H1 (cell line): ENCODE measurements at regions of chrX and their contacts with region 1.

Region 1: GRCh38 chrX:40175511-40176350 is 78.0 kb upstream of the BCOR start:
- DNase-seq: peak in 1 of 2 experiments; percentile 56
- H3K4me3 ChIP-seq: peak overlapping the region; percentile 56 to 69 (median 61)
- H3K27ac ChIP-seq: peak overlapping the region; percentile 88
- H3K4me1 ChIP-seq: peaks cover 0 to 19% (median 9%) of the 10 kb centered on the region in 4 experiments; a peak in 6 of 7 replicates
- H3K27me3 ChIP-seq: peaks cover 0 to 7% (median 0%) of the 10 kb centered on the region in 4 experiments; a peak in 2 of 7 replicates
- CTCF ChIP-seq: no peak
- EP300 ChIP-seq: no peak
- POLR2A ChIP-seq: peak in 1 of 2 experiments; percentile 5; a peak in 1 of 3 replicates
- RAD21 ChIP-seq: no peak

Region 2: GRCh38 chrX:40153335-40154249 is 22.1 kb before region 1 on chrX:
- CTCF ChIA-PET with region 1: interaction called, 5 read pairs
- POLR2A ChIA-PET with region 1: interaction called, 43 read pairs
- DNase-seq: peak in 1 of 2 experiments; percentile 51
- H3K4me3 ChIP-seq: peak overlapping the region; percentile 36 to 86 (median 54)
- H3K27ac ChIP-seq: no peak overlapping the region
- H3K4me1 ChIP-seq: peaks cover 6 to 22% (median 15%) of the 10 kb centered on the region in 4 experiments
- H3K27me3 ChIP-seq: peaks cover 8 to 36% (median 28%) of the 10 kb centered on the region in 4 experiments
- CTCF ChIP-seq: no peak
- EP300 ChIP-seq: no peak
- POLR2A ChIP-seq: no peak; a peak in 1 of 3 replicates
- RAD21 ChIP-seq: no peak

Region 3: GRCh38 chrX:40326186-40326965 is 150.6 kb after region 1 on chrX:
- CTCF ChIA-PET with region 1: no interaction called
- POLR2A ChIA-PET with region 1: no interaction called
- DNase-seq: no peak
- H3K4me3 ChIP-seq: no peak overlapping the region
- H3K27ac ChIP-seq: no peak overlapping the region
- H3K4me1 ChIP-seq: peaks cover 0 to 4% (median under 1%) of the 10 kb centered on the region in 4 experiments; a peak in 1 of 7 replicates
- H3K27me3 ChIP-seq: no peaks in the 10 kb centered on the region
- CTCF ChIP-seq: no peak
- EP300 ChIP-seq: no peak
- POLR2A ChIP-seq: no peak
- RAD21 ChIP-seq: no peak